PC-3 (cell line): ENCODE measurements at regions of chr11 and their contacts with region 1.

Region 1: GRCh38 chr11:72179804-72180396 is 12.0 kb upstream of the FOLR1 start:
- DNase-seq: no peak
- ATAC-seq: no peak
- H3K4me3 ChIP-seq: no peak overlapping the region
- H3K27ac ChIP-seq: no peak overlapping the region
- H3K4me1 ChIP-seq: 0 out of 2 replicates have a peak, but pooled peaks cover 4% of the 10 kb centered on the region
- H3K27me3 ChIP-seq: 0 out of 2 replicates have a peak, but pooled peaks cover 3% of the 10 kb centered on the region
- CTCF ChIP-seq: no peak

Region 2: GRCh38 chr11:72102946-72103753 is 76.8 kb before region 1 on chr11 and contains the start of gene LAMTOR1:
- CTCF ChIA-PET with region 1: no interaction called
- POLR2A ChIA-PET with region 1: no interaction called
- intact Hi-C with region 1: loop called (anchors 5 kb)
- DNase-seq: peak; percentile 99
- ATAC-seq: peak; percentile 94
- H3K4me3 ChIP-seq: peak within 1 kb of the TSS; percentile 83
- H3K27ac ChIP-seq: peak within 1 kb of the TSS; percentile 81
- H3K4me1 ChIP-seq: peaks cover 18% of the 10 kb centered on the region
- H3K27me3 ChIP-seq: no peaks in the 10 kb centered on the region
- CTCF ChIP-seq: peak; percentile 47; the same call in 1 of the 2 replicates
- total RNA-seq, gene LAMTOR1: 160 and 169 TPM in 2 replicates